Calu3 (cell line): ENCODE measurements at regions of chr15 and their contacts with region 1.

Region 1: GRCh38 chr15:34708422-34708821 is 46.4 kb downstream of the GJD2 start:
- DNase-seq: no peak
- H3K4me3 Mint-ChIP-seq: no peak overlapping the region
- H3K27ac Mint-ChIP-seq: no peak overlapping the region
- H3K4me1 Mint-ChIP-seq: no peaks in the 10 kb centered on the region
- H3K27me3 Mint-ChIP-seq: peaks cover 10% of the 10 kb centered on the region
- CTCF ChIP-seq: peak; percentile 19

Region 2: GRCh38 chr15:34663101-34663500 is 45.3 kb before region 1 on chr15:
- CTCF ChIA-PET with region 1: no interaction called
- intact Hi-C with region 1: loop called (anchors 2 kb)
- DNase-seq: no peak
- H3K4me3 Mint-ChIP-seq: no peak overlapping the region
- H3K27ac Mint-ChIP-seq: no peak overlapping the region
- H3K4me1 Mint-ChIP-seq: no peaks in the 10 kb centered on the region
- H3K27me3 Mint-ChIP-seq: peaks cover 40% of the 10 kb centered on the region
- CTCF ChIP-seq: no peak

Region 3: DNA sequence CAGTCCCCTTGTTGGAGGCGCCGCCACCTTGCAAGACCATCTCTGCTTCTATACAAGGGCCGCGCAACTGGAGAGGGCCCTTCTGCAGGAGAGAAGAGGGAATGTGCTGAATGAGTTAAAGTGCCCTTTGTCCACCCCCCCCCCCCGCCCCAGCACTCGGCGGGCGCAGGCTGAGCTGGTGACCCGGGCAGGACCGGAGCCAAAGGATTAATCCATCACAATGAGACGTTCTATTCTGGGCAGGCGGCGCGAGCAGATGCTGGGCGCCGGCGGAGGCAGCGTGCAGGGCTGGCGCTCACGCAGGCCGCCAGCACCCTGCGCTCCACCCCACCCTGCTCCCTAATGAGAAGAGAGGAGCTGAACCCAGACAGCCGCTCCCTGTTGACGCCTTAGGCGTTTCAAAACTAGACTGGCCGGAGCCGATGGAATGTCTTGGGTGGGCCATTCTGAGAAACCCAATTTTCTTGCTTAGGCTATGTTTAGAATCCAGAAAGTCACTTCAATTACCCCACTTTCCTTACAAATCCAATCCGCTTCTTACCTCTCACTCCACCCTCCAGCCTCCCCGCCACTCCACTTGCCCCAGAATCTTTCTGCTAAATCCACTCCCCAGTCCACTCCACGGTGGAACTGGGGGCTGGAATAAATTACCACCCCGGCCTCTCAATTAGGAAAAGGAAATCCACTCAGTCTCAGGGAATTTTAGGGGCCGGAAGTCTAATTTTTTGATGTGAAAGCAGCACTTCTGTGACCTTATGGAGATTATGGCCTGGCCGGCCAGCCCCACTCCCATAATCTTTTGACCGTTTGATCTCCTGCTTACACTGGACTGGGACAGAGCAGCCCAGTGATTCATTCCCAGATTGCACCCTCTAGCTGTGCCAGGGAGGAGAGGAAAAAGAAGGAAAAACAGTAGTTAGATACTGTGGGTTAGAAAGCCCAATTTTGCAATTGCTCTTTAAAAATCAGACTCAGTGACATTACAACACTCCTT is 13.7 kb after region 1 on chr15:
- CTCF ChIA-PET with region 1: no interaction called
- intact Hi-C with region 1: no loop called
- DNase-seq: peak; percentile 4
- H3K4me3 Mint-ChIP-seq: peak overlapping the region; percentile 36
- H3K27ac Mint-ChIP-seq: no peak overlapping the region
- H3K4me1 Mint-ChIP-seq: no peaks in the 10 kb centered on the region
- H3K27me3 Mint-ChIP-seq: peaks cover 8% of the 10 kb centered on the region
- CTCF ChIP-seq: no peak

Region 4: DNA sequence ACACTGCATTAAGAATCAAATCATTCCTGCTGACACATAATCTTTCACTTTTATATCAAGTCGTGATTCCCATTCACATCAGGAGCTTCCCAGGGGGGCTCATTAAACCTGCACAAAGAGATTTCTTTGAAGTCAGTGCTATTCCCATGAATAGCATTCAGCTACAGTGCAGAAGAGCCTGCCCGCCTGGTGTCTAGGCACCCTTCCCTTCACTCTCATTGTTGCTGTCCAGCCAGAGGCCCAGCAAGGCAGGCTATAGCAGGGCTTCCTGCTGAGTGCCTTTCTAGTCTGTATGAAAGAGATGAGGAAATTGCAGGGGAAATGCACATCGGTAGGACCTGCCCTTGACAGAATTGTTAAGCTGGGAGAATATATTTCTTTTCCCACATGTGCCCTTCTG is 50.9 kb after region 1 on chr15:
- CTCF ChIA-PET with region 1: no interaction called
- intact Hi-C with region 1: no loop called
- DNase-seq: no peak
- H3K4me3 Mint-ChIP-seq: no peak overlapping the region
- H3K27ac Mint-ChIP-seq: no peak overlapping the region
- H3K4me1 Mint-ChIP-seq: no peaks in the 10 kb centered on the region
- H3K27me3 Mint-ChIP-seq: peaks cover 12% of the 10 kb centered on the region
- CTCF ChIP-seq: no peak